Mammary epithelial cell (primary cell): ENCODE measurements at regions of chr19 and their contacts with region 1.

Region 1: GRCh38 chr19:1521636-1522035 is 2.2 kb upstream of the PLK5 start:
- DNase-seq: no peak
- H3K4me3 ChIP-seq: no peak overlapping the region
- H3K27ac ChIP-seq: no peak overlapping the region
- H3K4me1 ChIP-seq: no peaks in the 10 kb centered on the region
- H3K27me3 ChIP-seq: peaks cover 13% of the 10 kb centered on the region
- CTCF ChIP-seq: no peak

Region 2: DNA sequence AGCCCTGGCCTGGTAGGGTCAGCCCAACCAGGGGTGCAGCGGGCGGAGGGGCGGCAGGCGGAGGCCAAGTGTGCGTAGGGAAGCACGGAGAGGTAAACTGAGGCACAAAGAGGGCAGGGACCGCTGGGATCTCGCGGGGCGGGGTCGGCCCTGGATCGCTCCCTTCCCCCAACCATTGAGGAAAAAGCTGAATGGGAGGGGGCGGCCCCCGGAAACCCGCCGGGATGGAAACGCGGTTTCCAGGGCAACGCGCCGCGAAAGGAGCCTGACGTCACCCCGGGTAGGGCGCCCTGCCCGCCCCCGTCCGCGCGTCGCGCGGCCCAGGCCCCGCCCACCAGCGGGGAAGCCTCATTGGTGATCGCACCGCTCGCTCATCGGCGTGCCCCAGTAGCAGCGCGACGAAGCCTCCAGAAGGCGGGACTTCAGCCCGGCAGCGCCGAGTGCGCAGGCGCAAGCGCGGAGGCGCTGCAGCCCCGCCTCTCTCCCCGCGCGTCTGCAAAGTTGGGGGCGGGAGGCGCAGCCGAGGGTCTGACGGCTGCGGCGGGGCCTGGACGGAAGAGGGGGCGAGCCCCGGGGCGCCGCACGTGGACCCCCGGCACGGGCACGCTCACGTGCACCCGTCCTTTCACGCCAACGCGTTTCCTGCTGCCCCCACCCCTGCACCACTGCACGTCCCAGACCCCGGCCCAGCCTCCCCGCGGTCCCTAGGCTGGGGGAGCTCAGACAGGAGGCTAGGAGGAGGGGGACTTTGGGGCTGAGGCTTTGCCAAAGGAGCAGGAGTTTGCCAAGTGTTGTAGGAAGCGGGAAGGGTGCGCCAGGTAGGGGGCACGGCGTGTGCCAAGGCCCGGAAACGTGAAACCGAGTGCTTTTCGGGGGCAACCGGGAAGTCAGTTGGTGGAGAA is 260.7 kb before region 1 on chr19:
- CTCF ChIA-PET with region 1: no interaction called
- dilution Hi-C with region 1: no loop called
- in situ Hi-C with region 1: no loop called
- intact Hi-C with region 1: no loop called
- DNase-seq: peak; percentile 94
- H3K4me3 ChIP-seq: peak overlapping the region; percentile 76 to 85 (median 79)
- H3K27ac ChIP-seq: peak overlapping the region; percentile 90
- H3K4me1 ChIP-seq: peaks cover 67% of the 10 kb centered on the region
- H3K27me3 ChIP-seq: no peaks in the 10 kb centered on the region
- CTCF ChIP-seq: no peak

Region 3: GRCh38 chr19:1560286-1560882 is 38.7 kb after region 1 on chr19:
- CTCF ChIA-PET with region 1: no interaction called
- dilution Hi-C with region 1: loop called (anchors 5 kb)
- in situ Hi-C with region 1: no loop called
- intact Hi-C with region 1: no loop called
- DNase-seq: no peak
- H3K4me3 ChIP-seq: no peak overlapping the region
- H3K27ac ChIP-seq: no peak overlapping the region
- H3K4me1 ChIP-seq: no peaks in the 10 kb centered on the region
- H3K27me3 ChIP-seq: no peaks in the 10 kb centered on the region
- CTCF ChIP-seq: no peak

Region 4: GRCh38 chr19:1605236-1606137 is 83.9 kb after region 1 on chr19 and contains the start of gene UQCR11:
- CTCF ChIA-PET with region 1: no interaction called
- dilution Hi-C with region 1: no loop called
- in situ Hi-C with region 1: no loop called
- intact Hi-C with region 1: no loop called
- DNase-seq: peak; percentile 92
- H3K4me3 ChIP-seq: peak within 1 kb of the TSS; percentile 88 to 99 (median 88)
- H3K27ac ChIP-seq: peak within 1 kb of the TSS; percentile 68
- H3K4me1 ChIP-seq: peaks cover 5% of the 10 kb centered on the region
- H3K27me3 ChIP-seq: no peaks in the 10 kb centered on the region
- CTCF ChIP-seq: peak; percentile 44 to 72
- total RNA-seq, gene UQCR11: 28.3 to 250 TPM

Region 5: DNA sequence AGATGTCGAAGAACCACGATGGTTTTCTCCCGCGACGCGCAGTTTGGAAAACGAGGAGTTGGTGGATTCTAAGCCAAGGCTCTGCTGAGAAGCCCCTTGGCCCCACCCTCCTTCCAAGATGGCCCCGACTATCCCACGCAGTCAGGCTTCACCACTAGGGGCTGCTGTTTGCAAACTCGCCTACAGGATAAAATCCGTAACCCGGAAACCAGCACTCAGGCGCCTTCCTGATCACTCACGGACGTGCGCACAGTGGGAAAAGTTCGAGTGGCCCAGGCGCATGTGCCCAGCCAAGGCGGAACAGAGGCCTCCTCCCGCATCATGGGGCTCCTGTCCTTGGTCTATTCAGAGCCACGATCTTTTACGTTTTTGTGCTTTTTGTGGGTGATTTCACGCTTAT is 102.8 kb after region 1 on chr19:
- CTCF ChIA-PET with region 1: no interaction called
- dilution Hi-C with region 1: loop called (anchors 5 kb)
- in situ Hi-C with region 1: no loop called
- intact Hi-C with region 1: no loop called
- DNase-seq: no peak
- H3K4me3 ChIP-seq: no peak overlapping the region
- H3K27ac ChIP-seq: no peak overlapping the region
- H3K4me1 ChIP-seq: no peaks in the 10 kb centered on the region
- H3K27me3 ChIP-seq: no peaks in the 10 kb centered on the region
- CTCF ChIP-seq: peak; percentile 51 to 53